Activated T-helper 2 cell treated with anti-CD3 and anti-CD28 coated beads, Interferon-gamma antibody, Interleukin-2, Interleukin-4, amounts not matched to agents 10 μg/mL and 5 μg/mL and 100 μg/mL, durations not matched to agents 14 hours and 24 hours and 36 hours (primary cell): ENCODE measurements at regions of chr15 and their contacts with region 1.

Region 1: GRCh38 chr15:66293419-66294156 is at the start of gene DIS3L:
- DNase-seq: peak; percentile 71
- H3K4me3 Mint-ChIP-seq: peak within 1 kb of the TSS; percentile 89
- H3K27ac Mint-ChIP-seq: peak within 1 kb of the TSS; percentile 92
- H3K4me1 Mint-ChIP-seq: peaks cover 45% of the 10 kb centered on the region
- H3K27me3 Mint-ChIP-seq: no peaks in the 10 kb centered on the region
- total RNA-seq, gene DIS3L: 49.8 and 56.3 TPM in 2 replicates

Region 2: GRCh38 chr15:65836665-65837064 is 456.9 kb before region 1 on chr15:
- intact Hi-C with region 1: no loop called
- DNase-seq: no peak
- H3K4me3 Mint-ChIP-seq: no peak overlapping the region
- H3K27ac Mint-ChIP-seq: no peak overlapping the region
- H3K4me1 Mint-ChIP-seq: peaks cover 24% of the 10 kb centered on the region
- H3K27me3 Mint-ChIP-seq: no peaks in the 10 kb centered on the region

Region 3: GRCh38 chr15:65881766-65882434 is 411.7 kb before region 1 on chr15:
- intact Hi-C with region 1: loop called (anchors 10 kb)
- DNase-seq: no peak
- H3K4me3 Mint-ChIP-seq: no peak overlapping the region
- H3K27ac Mint-ChIP-seq: no peak overlapping the region
- H3K4me1 Mint-ChIP-seq: peaks cover 55% of the 10 kb centered on the region
- H3K27me3 Mint-ChIP-seq: no peaks in the 10 kb centered on the region

Region 4: GRCh38 chr15:66497502-66498455 is 204.2 kb after region 1 on chr15 and contains the start of gene SNAPC5:
- intact Hi-C with region 1: loop called (anchors 2 kb)
- DNase-seq: peak; percentile 96
- H3K4me3 Mint-ChIP-seq: peak within 1 kb of the TSS; percentile 95
- H3K27ac Mint-ChIP-seq: peak within 1 kb of the TSS; percentile 93
- H3K4me1 Mint-ChIP-seq: peaks cover 35% of the 10 kb centered on the region
- H3K27me3 Mint-ChIP-seq: no peaks in the 10 kb centered on the region
- total RNA-seq, gene SNAPC5: 23.2 and 23.9 TPM in 2 replicates